Dendritic cell treated with granulocyte-macrophage colony-stimulating factor and Interleukin-4, amounts not matched to agents 40 ng/mL and 50 ng/mL, for 4 days (primary cell): ENCODE measurements at regions of chr3 and their contacts with region 1.

Region 1: DNA sequence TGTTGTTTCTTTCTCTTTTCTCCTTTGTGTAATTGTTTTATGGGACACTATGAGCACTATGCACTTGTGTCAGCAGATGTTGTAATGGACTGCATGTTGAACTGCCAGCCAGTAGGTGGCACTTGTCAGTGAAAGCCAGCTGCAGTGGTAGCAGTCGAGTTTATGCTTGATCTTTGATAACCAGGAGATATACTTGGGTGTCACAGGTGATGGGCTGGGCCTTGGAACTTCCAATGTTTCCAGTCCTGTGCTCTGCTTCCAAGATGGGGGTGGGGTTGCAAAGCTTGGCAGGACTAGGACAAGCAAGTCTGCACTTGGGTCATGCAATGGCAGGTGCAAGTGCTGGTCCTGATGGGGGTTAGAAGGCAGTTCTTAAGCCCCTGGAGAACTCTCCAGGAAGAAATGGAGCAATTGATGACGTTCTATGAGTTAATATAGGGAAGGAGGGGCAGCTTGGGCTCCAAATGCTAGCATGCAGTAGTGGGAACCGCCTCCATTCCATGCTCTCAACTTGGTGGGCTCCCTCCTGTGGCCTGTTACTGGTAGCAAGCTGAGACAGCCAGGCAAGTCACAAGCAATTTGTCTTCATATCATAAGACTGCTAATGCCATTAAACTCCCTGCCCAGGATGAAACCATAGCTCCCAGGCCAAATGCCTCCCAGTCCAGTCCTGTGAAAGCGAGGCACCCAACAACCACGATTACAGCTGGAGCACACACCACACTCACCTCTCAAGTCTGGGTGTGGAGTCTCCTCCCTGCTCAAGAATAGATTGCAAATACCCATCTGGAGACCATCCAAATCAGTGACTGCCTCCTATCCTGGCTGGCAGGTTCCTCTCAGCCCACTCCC is 287.2 kb downstream of the CGGBP1 start:
- H3K4me3 Mint-ChIP-seq: no peak overlapping the region
- H3K27ac Mint-ChIP-seq: no peak overlapping the region
- H3K4me1 Mint-ChIP-seq: no peaks in the 10 kb centered on the region
- H3K27me3 Mint-ChIP-seq: no peaks in the 10 kb centered on the region

Region 2: DNA sequence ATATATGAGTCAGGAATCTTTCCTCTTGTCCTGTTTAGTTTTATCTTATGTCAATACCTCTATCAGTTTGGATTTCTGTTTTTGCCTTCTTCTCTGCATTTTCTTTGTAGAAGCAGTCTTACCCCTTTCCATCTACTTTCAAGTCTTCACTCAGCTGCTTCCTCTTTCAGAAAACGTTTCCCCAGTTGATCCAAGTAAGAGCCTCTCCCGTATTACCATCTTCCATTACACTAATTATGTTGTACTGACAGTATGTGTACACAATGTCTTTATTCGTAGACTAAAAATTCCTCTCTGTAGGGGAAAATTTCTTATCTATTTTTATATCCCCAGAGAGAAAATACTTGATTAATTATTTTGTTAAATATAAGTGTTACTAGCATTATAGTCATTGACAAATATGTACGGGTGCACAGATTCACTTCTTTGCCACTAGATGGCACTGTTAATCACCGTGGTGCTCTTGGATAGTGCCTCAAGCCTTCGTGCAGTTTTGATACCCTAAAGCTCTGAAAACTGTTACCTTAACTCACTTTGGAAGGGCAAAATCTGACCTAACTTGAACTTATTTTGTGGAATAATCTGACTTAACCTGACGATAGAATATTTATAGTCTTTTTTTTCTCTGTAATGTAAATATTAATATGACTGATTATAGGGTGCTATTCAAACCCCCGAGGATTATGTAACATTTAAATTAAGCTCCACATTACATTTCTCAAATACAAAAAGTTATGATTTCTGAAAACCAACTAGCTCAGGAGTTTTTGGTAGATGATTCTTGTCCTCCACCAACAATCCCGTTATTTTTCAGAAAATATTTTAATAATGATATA is 421.0 kb before region 1 on chr3:
- intact Hi-C with region 1: loop called (anchors 5 kb)
- H3K4me3 Mint-ChIP-seq: no peak overlapping the region
- H3K27ac Mint-ChIP-seq: no peak overlapping the region
- H3K4me1 Mint-ChIP-seq: no peaks in the 10 kb centered on the region
- H3K27me3 Mint-ChIP-seq: no peaks in the 10 kb centered on the region

Region 3: GRCh38 chr3:87503900-87504508 is 267.6 kb before region 1 on chr3:
- intact Hi-C with region 1: no loop called
- H3K4me3 Mint-ChIP-seq: no peak overlapping the region
- H3K27ac Mint-ChIP-seq: no peak overlapping the region
- H3K4me1 Mint-ChIP-seq: no peaks in the 10 kb centered on the region
- H3K27me3 Mint-ChIP-seq: no peaks in the 10 kb centered on the region

Region 4: GRCh38 chr3:88105325-88105724 is 333.8 kb after region 1 on chr3:
- intact Hi-C with region 1: loop called (anchors 5 kb)
- H3K4me3 Mint-ChIP-seq: no peak overlapping the region
- H3K27ac Mint-ChIP-seq: no peak overlapping the region
- H3K4me1 Mint-ChIP-seq: no peaks in the 10 kb centered on the region
- H3K27me3 Mint-ChIP-seq: no peaks in the 10 kb centered on the region